CD8-positive, alpha-beta T cell (primary cell): ENCODE measurements at regions of chr1 and their contacts with region 1.

Region 1: DNA sequence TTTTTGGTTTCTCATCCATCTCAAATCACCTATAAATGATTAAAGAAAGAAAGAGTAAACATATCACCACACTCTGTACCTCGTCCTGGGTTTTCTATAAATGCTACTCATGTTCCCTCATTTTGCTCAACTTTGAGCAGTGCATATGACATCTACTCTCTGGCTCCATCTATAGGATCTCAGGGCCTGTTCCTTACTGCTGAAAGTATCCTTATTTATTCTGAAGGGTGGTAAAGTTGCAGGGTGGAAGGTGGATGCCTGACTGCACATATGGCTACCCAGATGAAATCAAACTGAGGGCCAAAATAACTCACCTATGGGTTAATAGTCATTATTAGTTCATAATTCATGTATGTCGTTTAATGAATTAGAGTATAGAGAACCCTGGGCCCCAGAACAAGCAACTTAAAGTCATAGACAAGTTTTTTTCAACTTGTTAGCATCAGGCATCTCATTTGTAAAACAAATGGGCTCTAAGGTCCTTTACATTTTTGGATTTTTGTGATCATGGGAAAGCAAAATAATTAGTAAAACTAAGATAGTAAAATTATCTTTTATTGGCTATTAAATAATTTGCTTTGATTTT is 46.5 kb downstream of the NCF2 start:
- DNase-seq: peak in 3 of 9 experiments; percentile 9 to 70 (median 55)
- ATAC-seq: peak; percentile 98
- H3K4me3 ChIP-seq: no peak overlapping the region
- H3K4me3 Mint-ChIP-seq: no peak overlapping the region
- H3K27ac ChIP-seq: no peak overlapping the region
- H3K27ac Mint-ChIP-seq: peak overlapping the region; percentile 41
- H3K4me1 ChIP-seq: no peaks in the 10 kb centered on the region
- H3K4me1 Mint-ChIP-seq: peaks cover 8% of the 10 kb centered on the region
- H3K27me3 ChIP-seq: no peaks in the 10 kb centered on the region
- H3K27me3 Mint-ChIP-seq: no peaks in the 10 kb centered on the region
- CTCF ChIP-seq: peak; percentile 59

Region 2: GRCh38 chr1:182962554-182963115 is 581.1 kb before region 1 on chr1:
- CTCF ChIA-PET with region 1: no interaction called
- POLR2A ChIA-PET with region 1: no interaction called
- intact Hi-C with region 1: loop called in 1 of 2 experiments (anchors 5 kb)
- DNase-seq: peak in 3 of 9 experiments; percentile 20 to 39 (median 28)
- ATAC-seq: peak; percentile 57
- H3K4me3 ChIP-seq: no peak overlapping the region
- H3K4me3 Mint-ChIP-seq: no peak overlapping the region
- H3K27ac ChIP-seq: no peak overlapping the region
- H3K27ac Mint-ChIP-seq: no peak overlapping the region
- H3K4me1 ChIP-seq: no peaks in the 10 kb centered on the region
- H3K4me1 Mint-ChIP-seq: no peaks in the 10 kb centered on the region
- H3K27me3 ChIP-seq: peaks cover 0 to 2% of the 10 kb centered on the region in 2 experiments
- H3K27me3 Mint-ChIP-seq: peaks cover 9% of the 10 kb centered on the region
- CTCF ChIP-seq: peak; percentile 51

Region 3: DNA sequence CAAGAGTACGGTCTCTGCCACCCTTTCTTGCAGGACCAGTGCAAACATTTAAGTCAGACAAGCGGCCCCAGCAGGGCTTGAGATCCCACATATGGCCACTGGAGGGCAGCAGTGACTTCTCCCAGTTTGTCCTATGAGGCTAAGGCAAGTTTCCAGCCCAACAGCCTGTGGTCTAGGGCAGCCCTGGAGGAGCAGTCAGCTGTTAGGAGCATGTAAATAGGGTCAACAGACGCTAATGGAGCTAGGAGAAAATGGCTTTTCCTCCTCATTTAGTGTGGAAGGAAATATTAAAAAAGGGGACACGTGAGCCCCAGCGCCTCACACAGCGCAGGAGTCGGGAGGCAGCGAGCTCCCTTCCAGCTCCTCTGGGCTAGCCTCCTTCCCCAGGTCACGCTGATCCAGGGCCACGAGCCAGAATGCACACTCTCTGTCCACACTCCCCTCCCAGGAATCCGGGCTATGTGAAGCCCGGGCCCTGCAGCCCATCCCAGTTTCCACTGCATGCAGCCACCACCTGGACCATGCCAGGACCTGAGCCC is 262.1 kb before region 1 on chr1:
- CTCF ChIA-PET with region 1: no interaction called
- POLR2A ChIA-PET with region 1: no interaction called
- intact Hi-C with region 1: loop called (anchors 5 kb)
- DNase-seq: peak; percentile 38 to 77 (median 60)
- ATAC-seq: peak; percentile 55
- H3K4me3 ChIP-seq: no peak overlapping the region
- H3K4me3 Mint-ChIP-seq: no peak overlapping the region
- H3K27ac ChIP-seq: no peak overlapping the region
- H3K27ac Mint-ChIP-seq: no peak overlapping the region
- H3K4me1 ChIP-seq: no peaks in the 10 kb centered on the region
- H3K4me1 Mint-ChIP-seq: no peaks in the 10 kb centered on the region
- H3K27me3 ChIP-seq: no peaks in the 10 kb centered on the region
- H3K27me3 Mint-ChIP-seq: peaks cover 7% of the 10 kb centered on the region
- CTCF ChIP-seq: peak; percentile 67

Region 4: GRCh38 chr1:183520379-183520778 is 23.3 kb before region 1 on chr1:
- CTCF ChIA-PET with region 1: no interaction called
- POLR2A ChIA-PET with region 1: no interaction called
- intact Hi-C with region 1: loop called in 1 of 2 experiments (anchors 2 kb)
- DNase-seq: no peak
- ATAC-seq: no peak
- H3K4me3 ChIP-seq: no peak overlapping the region
- H3K4me3 Mint-ChIP-seq: no peak overlapping the region
- H3K27ac ChIP-seq: no peak overlapping the region
- H3K27ac Mint-ChIP-seq: no peak overlapping the region
- H3K4me1 ChIP-seq: no peaks in the 10 kb centered on the region
- H3K4me1 Mint-ChIP-seq: no peaks in the 10 kb centered on the region
- H3K27me3 ChIP-seq: no peaks in the 10 kb centered on the region
- H3K27me3 Mint-ChIP-seq: no peaks in the 10 kb centered on the region
- CTCF ChIP-seq: no peak

Region 5: DNA sequence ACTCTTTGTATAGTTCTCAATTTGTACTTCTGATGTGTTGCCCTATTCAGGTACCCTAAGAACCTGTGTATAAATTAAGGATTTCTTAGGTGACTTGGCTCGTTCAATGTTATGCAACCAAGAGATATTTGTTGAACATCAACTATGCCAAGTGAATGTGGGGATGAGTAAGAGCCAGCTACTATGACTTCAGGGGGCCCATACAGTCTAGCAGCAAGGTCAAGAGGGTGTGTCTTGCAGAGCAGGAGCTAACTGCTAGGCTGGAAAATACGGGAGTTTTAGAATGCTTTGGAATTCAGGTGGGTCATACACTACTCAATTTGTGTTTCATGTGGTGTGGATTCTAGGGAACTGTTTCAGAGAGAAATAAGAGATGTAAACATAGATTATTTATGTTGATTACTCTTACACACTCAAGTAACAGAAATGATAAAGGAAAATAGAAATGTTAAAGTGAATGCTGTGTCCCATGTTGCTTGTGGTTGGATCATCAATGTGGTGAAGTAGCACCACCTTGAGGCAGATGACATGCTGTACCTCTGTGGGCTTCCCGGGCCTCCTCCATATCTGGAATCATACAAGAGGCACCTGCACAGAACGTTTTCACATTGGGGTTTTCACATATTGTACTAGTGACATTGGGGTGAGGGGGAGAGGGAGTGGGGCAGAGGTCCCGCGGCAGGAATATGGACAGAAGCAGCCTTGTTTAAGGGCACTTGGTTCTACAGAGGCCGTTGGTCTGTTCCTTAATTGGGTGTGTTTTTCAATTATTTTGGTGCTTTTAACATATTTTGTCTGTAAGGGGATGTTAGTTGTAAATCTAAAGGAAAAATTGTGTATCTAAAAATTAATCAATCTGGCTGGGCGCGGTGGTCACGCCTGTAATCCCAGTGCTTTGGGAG is 79.4 kb after region 1 on chr1:
- CTCF ChIA-PET with region 1: no interaction called
- POLR2A ChIA-PET with region 1: no interaction called
- intact Hi-C with region 1: loop called (anchors 2 to 5 kb)
- DNase-seq: peak in 8 of 9 experiments; percentile 13 to 72 (median 52)
- ATAC-seq: peak; percentile 99
- H3K4me3 ChIP-seq: no peak overlapping the region
- H3K4me3 Mint-ChIP-seq: no peak overlapping the region
- H3K27ac ChIP-seq: no peak overlapping the region
- H3K27ac Mint-ChIP-seq: peak overlapping the region; percentile 89
- H3K4me1 ChIP-seq: peaks cover 6% of the 10 kb centered on the region
- H3K4me1 Mint-ChIP-seq: peaks cover 38% of the 10 kb centered on the region
- H3K27me3 ChIP-seq: no peaks in the 10 kb centered on the region
- H3K27me3 Mint-ChIP-seq: no peaks in the 10 kb centered on the region
- CTCF ChIP-seq: peak; percentile 51

Region 6: GRCh38 chr1:183685112-183685713 is 141.5 kb after region 1 on chr1:
- CTCF ChIA-PET with region 1: no interaction called
- POLR2A ChIA-PET with region 1: no interaction called
- intact Hi-C with region 1: loop called in 1 of 2 experiments (anchors 5 kb)
- DNase-seq: peak in 3 of 9 experiments; percentile 18 to 69 (median 58)
- ATAC-seq: peak; percentile 83
- H3K4me3 ChIP-seq: no peak overlapping the region
- H3K4me3 Mint-ChIP-seq: no peak overlapping the region
- H3K27ac ChIP-seq: no peak overlapping the region
- H3K27ac Mint-ChIP-seq: no peak overlapping the region
- H3K4me1 ChIP-seq: no peaks in the 10 kb centered on the region
- H3K4me1 Mint-ChIP-seq: peaks cover 4% of the 10 kb centered on the region
- H3K27me3 ChIP-seq: no peaks in the 10 kb centered on the region
- H3K27me3 Mint-ChIP-seq: peaks cover 5% of the 10 kb centered on the region
- CTCF ChIP-seq: peak; percentile 83

Region 7: DNA sequence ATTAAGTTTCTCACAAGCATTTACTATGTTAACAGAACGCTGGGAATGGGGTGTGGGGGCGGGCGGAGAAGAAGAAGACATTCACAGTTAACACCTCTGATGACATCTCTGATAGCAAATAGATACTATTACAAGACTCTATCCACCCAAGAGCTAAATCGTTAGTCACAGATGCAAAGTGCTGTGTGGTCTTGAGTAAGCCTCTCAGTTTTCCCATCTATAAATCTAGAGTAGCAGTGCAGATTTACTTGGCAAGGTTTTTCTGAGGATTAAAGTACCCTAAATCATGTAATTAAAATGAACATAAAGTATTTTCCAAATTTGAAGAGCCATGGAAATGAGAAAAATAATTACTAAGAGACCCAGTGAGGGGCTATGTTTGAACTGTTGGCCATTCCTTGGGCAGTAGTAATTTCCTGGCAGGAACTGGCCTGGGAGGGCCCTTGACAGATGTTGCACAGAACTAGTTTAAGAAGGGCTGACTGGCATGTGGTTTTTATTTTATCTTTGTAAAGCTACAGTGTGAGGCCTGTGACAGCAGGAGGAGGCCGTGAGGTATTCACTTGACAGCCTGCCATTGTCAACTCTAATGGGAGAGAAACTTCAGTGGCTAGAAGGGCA is 168.1 kb after region 1 on chr1:
- CTCF ChIA-PET with region 1: no interaction called
- POLR2A ChIA-PET with region 1: no interaction called
- intact Hi-C with region 1: no loop called
- DNase-seq: no peak
- ATAC-seq: no peak
- H3K4me3 ChIP-seq: no peak overlapping the region
- H3K4me3 Mint-ChIP-seq: no peak overlapping the region
- H3K27ac ChIP-seq: no peak overlapping the region
- H3K27ac Mint-ChIP-seq: no peak overlapping the region
- H3K4me1 ChIP-seq: no peaks in the 10 kb centered on the region
- H3K4me1 Mint-ChIP-seq: no peaks in the 10 kb centered on the region
- H3K27me3 ChIP-seq: no peaks in the 10 kb centered on the region
- H3K27me3 Mint-ChIP-seq: no peaks in the 10 kb centered on the region
- CTCF ChIP-seq: no peak